PC-3 (cell line): ENCODE measurements at regions of chr4 and their contacts with region 1.

Region 1: DNA sequence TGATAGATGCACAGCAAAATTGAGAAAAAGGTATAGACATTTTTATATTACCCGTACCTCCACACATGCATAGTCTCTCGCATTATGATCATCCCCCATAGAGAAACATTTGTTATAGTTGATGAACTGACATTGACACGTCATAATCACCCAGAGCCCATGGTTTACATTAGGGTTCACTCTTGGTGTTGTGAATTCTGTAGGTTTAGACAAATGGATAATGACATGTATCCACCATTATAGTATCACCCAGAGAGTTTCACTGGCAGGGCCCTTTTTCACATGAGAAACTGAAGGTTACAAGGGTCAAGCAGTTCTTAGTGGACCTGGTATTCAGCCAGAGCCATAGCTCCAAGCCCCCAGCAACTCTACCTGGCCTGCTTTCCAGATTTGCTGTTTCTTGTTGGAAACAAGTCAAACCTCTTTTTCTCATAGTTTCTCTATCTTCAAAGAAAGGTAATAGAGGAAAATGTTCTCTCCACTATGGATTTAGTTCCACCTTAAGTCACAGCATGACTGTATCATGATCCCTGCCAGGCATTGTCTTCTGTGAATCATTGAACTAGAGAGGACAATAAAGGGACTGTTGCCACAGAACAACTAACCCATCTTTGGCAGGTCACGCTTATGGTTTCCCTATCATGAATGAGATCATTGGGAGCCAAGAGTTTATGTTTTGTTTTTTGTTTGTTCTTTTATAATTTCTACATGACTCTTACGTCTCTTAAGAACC is 64.0 kb downstream of the HHIP start:
- DNase-seq: peak; percentile 90
- ATAC-seq: peak; percentile 83
- H3K4me3 ChIP-seq: no peak overlapping the region
- H3K27ac ChIP-seq: peak overlapping the region; percentile 59
- H3K4me1 ChIP-seq: peaks cover 27% of the 10 kb centered on the region
- H3K27me3 ChIP-seq: 0 out of 2 replicates have a peak, but pooled peaks cover 6% of the 10 kb centered on the region
- CTCF ChIP-seq: no peak

Region 2: GRCh38 chr4:144627663-144628076 is 82.3 kb before region 1 on chr4:
- CTCF ChIA-PET with region 1: no interaction called
- POLR2A ChIA-PET with region 1: no interaction called
- intact Hi-C with region 1: loop called (anchors 1 kb)
- DNase-seq: peak; percentile 80
- ATAC-seq: peak; percentile 92
- H3K4me3 ChIP-seq: no peak overlapping the region
- H3K27ac ChIP-seq: 0 out of 2 replicates have a peak overlapping the region, but pooled peaks have one; percentile 10
- H3K4me1 ChIP-seq: peaks cover 12% of the 10 kb centered on the region
- H3K27me3 ChIP-seq: no peaks in the 10 kb centered on the region
- CTCF ChIP-seq: no peak

Region 3: DNA sequence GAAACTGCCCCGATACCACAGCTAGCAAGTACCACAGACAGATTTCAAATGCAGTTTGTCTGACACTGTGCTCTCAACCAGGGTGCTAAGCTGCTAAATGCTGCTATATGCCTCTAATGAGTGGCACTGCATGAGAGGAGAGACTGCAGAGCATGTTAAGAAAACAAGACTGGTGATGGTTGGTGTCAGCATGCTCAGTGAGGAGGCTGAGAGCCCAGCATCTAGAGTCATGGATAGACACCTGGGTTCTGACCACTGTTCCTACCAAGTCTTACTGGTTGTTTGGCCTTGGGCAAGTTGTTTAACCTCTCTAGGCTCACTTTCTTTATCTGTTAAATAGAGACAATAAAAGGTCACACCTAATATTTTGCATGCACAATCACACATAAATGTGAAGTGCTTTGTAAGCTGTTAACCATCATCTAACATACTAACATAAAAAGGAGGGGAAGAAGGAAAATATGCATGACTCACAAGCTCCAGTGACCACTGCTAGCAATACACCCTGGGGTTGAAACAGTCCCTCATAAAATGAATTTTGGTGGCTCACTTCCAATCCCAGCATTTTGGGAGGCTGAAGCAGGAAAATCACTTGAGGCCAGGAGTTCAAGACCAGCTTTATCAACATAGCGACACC is 43.3 kb before region 1 on chr4:
- CTCF ChIA-PET with region 1: no interaction called
- POLR2A ChIA-PET with region 1: no interaction called
- intact Hi-C with region 1: no loop called
- DNase-seq: peak; percentile 72
- ATAC-seq: peak; percentile 97
- H3K4me3 ChIP-seq: no peak overlapping the region
- H3K27ac ChIP-seq: no peak overlapping the region
- H3K4me1 ChIP-seq: peaks cover 15% of the 10 kb centered on the region
- H3K27me3 ChIP-seq: no peaks in the 10 kb centered on the region
- CTCF ChIP-seq: no peak

Region 4: DNA sequence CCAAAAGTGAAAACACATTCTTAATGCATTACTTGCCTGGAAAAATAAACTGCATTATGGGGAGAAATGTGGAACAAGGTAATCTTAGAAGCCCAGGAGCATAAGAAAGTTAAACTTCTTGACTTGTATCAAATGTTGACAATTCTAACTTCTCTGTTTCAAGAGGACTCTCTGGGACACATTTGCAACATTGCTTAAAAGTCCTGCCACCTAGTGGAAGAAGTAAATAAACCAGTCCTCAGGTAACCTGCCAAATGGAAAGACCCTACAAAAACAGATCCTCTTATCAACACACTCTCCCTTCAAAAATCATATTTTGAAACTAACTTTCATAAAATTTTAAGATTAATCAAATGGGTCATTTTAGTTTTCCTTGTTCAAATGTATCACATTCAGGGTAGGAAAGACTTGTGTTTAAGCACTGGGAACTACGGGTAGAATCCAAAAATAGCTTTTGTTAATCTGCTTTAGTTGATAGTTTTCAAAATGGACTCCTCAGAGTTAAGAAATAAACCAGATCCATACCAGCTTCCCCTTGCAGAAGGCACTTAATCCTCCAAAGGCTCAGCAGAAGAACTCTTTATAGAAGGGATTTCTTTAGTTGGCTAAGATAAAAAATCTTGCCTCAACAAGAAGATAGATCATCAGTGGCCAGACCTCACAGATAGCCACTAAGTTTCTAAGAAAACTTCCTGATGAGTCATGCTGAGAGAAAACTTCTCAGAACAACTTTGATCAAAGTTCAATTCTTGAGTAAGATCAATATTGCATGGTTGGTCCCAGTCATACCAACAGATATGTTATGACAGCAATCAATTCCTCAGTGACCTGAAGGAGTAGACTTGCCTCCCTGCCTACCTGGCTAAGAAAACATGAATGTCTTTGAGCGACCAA is 77.7 kb after region 1 on chr4:
- CTCF ChIA-PET with region 1: no interaction called
- POLR2A ChIA-PET with region 1: no interaction called
- intact Hi-C with region 1: no loop called
- DNase-seq: peak; percentile 62
- ATAC-seq: peak; percentile 49; the same call in 1 of the 2 replicates
- H3K4me3 ChIP-seq: no peak overlapping the region
- H3K27ac ChIP-seq: no peak overlapping the region
- H3K4me1 ChIP-seq: peaks cover 2% of the 10 kb centered on the region; the same call in 1 of the 2 replicates
- H3K27me3 ChIP-seq: no peaks in the 10 kb centered on the region
- CTCF ChIP-seq: peak; percentile 87

Region 5: DNA sequence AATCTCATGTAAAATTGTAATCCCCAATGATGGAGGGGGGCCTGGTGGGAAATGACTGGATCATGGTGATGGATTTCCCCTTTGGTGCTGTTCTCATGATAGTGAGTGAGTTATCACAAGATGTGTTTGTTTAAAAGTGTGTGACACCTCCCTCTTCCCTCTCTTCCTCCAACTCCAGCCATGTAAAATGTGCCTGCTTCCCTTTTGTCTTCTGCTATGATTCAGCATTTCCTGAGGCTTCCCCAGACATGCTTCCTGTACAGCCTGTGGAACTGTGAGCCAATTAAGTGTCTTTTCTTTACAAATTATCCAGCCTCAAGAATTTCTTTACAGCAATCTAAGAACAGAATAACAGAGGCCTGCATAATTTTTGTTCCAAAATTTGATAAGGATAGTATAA is 302.9 kb after region 1 on chr4:
- CTCF ChIA-PET with region 1: no interaction called
- POLR2A ChIA-PET with region 1: no interaction called
- intact Hi-C with region 1: no loop called
- DNase-seq: peak; percentile 41
- ATAC-seq: peak; percentile 75
- H3K4me3 ChIP-seq: no peak overlapping the region
- H3K27ac ChIP-seq: peak overlapping the region; percentile 28
- H3K4me1 ChIP-seq: no peaks in the 10 kb centered on the region
- H3K27me3 ChIP-seq: no peaks in the 10 kb centered on the region
- CTCF ChIP-seq: no peak